PC-3 (cell line): ENCODE measurements at regions of chr10 and their contacts with region 1.

Region 1: GRCh38 chr10:69439813-69440506 is 11.3 kb upstream of the TSPAN15 start:
- DNase-seq: peak; percentile 96
- ATAC-seq: peak; percentile 45
- H3K4me3 ChIP-seq: peak overlapping the region; percentile 31; the same call in 1 of the 2 replicates
- H3K27ac ChIP-seq: peak overlapping the region; percentile 91
- H3K4me1 ChIP-seq: peaks cover 53% of the 10 kb centered on the region
- H3K27me3 ChIP-seq: no peaks in the 10 kb centered on the region
- CTCF ChIP-seq: no peak

Region 2: GRCh38 chr10:69392481-69393000 is 47.4 kb before region 1 on chr10:
- CTCF ChIA-PET with region 1: no interaction called
- POLR2A ChIA-PET with region 1: no interaction called
- intact Hi-C with region 1: no loop called
- DNase-seq: peak; percentile 99
- ATAC-seq: peak; percentile 89
- H3K4me3 ChIP-seq: no peak overlapping the region
- H3K27ac ChIP-seq: no peak overlapping the region
- H3K4me1 ChIP-seq: peaks cover 17% of the 10 kb centered on the region
- H3K27me3 ChIP-seq: no peaks in the 10 kb centered on the region
- CTCF ChIP-seq: peak; percentile 100

Region 3: DNA sequence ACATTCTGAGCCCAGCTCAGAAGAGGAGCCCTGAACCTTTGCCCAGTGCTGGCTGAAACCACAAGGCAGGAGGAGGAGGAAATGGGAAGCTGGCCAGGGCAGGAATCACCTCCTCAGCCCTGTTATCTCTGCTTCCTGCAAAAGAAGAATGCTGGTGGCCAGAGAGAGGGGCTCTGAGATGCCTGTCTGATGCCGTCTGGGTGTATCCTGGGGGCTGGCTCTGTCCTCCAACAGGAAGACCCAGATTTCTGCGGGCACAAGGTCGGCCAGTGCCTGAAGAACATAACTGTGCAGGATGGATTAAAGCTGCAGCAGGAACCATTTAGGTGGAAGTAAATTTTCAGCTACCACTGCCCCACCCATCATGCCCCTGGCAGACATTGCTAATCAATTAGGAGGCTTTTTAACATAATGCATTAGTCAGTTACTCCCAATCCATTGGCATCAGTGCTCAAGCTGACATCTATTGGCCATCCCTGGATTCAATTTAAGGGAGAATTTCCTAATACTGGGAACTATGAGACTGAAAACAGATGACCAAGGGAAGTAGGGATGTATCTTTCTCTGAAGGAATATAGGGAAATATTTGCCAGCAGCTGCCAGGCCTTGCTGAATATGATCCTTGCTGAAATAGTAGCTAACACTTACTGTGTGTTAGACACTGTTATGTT is 429.5 kb after region 1 on chr10:
- CTCF ChIA-PET with region 1: no interaction called
- POLR2A ChIA-PET with region 1: interaction called, 14 read pairs
- intact Hi-C with region 1: no loop called
- DNase-seq: peak; percentile 99
- ATAC-seq: peak; percentile 64
- H3K4me3 ChIP-seq: peak overlapping the region; percentile 51
- H3K27ac ChIP-seq: peak overlapping the region; percentile 95
- H3K4me1 ChIP-seq: peaks cover 78% of the 10 kb centered on the region
- H3K27me3 ChIP-seq: no peaks in the 10 kb centered on the region
- CTCF ChIP-seq: no peak